Activated CD8-positive, alpha-beta memory T cell treated with anti-CD3 and anti-CD28 coated beads, Interleukin-2, amount 10 ng/mL, durations not matched to agents 7 days and 5 days (primary cell): ENCODE measurements at regions of chr19 and their contacts with region 1.

Region 1: GRCh38 chr19:10112895-10113591 is 1.6 kb downstream of the P2RY11 start:
- DNase-seq: peak; percentile 86
- ATAC-seq: peak; percentile 47
- H3K4me3 Mint-ChIP-seq: peak overlapping the region; percentile 87
- H3K27ac Mint-ChIP-seq: peak overlapping the region; percentile 98
- H3K4me1 Mint-ChIP-seq: peaks cover 70% of the 10 kb centered on the region
- H3K27me3 Mint-ChIP-seq: no peaks in the 10 kb centered on the region

Region 2: GRCh38 chr19:10021863-10022262 is 91.2 kb before region 1 on chr19:
- CTCF ChIA-PET with region 1: no interaction called
- DNase-seq: no peak
- ATAC-seq: no peak
- H3K4me3 Mint-ChIP-seq: no peak overlapping the region
- H3K27ac Mint-ChIP-seq: no peak overlapping the region
- H3K4me1 Mint-ChIP-seq: no peaks in the 10 kb centered on the region
- H3K27me3 Mint-ChIP-seq: peaks cover 13% of the 10 kb centered on the region

Region 3: DNA sequence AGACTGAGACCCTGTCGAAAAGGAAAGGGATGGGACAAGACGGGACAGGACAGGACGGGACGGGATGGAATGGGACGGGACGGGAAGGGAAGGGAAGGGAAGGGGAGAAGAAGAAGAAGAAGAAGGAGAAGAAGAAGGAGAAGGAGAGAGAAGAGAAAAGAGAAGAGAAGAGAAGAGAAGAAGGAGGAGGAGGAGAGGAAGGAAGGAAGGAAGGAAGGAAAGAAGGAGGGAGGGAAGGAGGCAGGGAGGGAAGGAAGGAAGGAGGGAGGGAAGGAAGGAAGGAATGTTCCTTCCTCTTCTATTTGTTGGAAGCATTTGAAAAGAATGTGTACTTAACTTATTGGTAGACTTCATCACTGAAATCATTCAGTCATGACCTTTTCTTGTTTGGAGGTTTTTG is 36.5 kb before region 1 on chr19:
- CTCF ChIA-PET with region 1: interaction called, 15 read pairs
- DNase-seq: no peak
- ATAC-seq: no peak
- H3K4me3 Mint-ChIP-seq: no peak overlapping the region
- H3K27ac Mint-ChIP-seq: no peak overlapping the region
- H3K4me1 Mint-ChIP-seq: no peaks in the 10 kb centered on the region
- H3K27me3 Mint-ChIP-seq: peaks cover 11% of the 10 kb centered on the region

Region 4: DNA sequence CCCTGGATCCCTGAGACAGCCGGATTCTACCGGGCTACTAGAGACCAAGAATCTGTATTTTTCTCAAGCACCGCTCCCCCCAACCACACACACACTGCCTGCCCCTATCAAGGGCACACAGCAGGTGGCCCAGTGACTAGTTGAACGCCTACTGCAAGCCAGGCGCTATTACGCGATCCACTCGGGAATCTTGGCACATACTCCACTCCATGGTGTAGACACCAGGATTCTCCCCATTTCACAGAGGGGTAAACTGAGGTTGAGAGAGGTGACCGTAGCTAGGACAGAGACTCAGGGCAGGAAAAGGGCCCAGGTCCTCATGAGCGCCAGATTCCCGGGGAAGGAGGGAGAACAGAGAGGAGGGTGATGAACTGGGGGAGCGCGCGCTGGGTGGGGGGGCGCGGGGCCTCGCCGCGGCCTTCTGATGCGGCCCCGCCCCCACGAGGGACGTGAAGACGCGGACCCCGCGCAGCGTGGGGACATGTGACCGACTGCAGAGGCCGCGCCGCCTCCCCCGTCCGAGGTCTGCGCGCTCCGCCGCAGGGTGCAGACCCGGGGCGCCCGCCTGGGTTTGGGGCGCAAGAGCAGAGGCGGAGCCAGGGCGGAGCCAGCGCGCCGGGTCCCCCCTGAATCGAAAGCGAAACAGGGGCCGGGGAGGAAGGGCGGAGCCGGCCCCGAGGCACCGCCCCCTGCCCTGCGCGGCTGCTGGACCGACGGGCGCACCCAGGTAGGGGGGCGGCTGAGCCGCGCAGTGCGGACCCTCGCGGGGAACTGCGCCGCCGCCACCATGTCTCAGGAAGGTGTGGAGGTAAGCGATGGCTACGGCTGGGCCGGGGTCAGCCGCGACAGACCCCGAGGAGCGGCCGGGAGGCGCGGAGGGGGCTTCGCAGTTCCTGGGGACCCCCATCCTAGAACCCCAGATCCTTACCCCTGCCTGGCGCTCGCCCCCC is 27.1 kb before region 1 on chr19 and contains the start of gene SHFL:
- CTCF ChIA-PET with region 1: interaction called, 14 read pairs
- DNase-seq: peak; percentile 92
- ATAC-seq: peak; percentile 98
- H3K4me3 Mint-ChIP-seq: peak within 1 kb of the TSS; percentile 79
- H3K27ac Mint-ChIP-seq: peak within 1 kb of the TSS; percentile 84
- H3K4me1 Mint-ChIP-seq: peaks cover 30% of the 10 kb centered on the region
- H3K27me3 Mint-ChIP-seq: no peaks in the 10 kb centered on the region
- total RNA-seq, gene SHFL: 95.3 to 146 TPM

Region 5: GRCh38 chr19:10173257-10173926 is 60.3 kb after region 1 on chr19:
- CTCF ChIA-PET with region 1: no interaction called
- DNase-seq: no peak
- ATAC-seq: no peak
- H3K4me3 Mint-ChIP-seq: no peak overlapping the region
- H3K27ac Mint-ChIP-seq: no peak overlapping the region
- H3K4me1 Mint-ChIP-seq: peaks cover 17% of the 10 kb centered on the region
- H3K27me3 Mint-ChIP-seq: no peaks in the 10 kb centered on the region